Astrocyte of the cerebellum (primary cell): ENCODE measurements at regions of chr14 and their contacts with region 1.

Region 1: DNA sequence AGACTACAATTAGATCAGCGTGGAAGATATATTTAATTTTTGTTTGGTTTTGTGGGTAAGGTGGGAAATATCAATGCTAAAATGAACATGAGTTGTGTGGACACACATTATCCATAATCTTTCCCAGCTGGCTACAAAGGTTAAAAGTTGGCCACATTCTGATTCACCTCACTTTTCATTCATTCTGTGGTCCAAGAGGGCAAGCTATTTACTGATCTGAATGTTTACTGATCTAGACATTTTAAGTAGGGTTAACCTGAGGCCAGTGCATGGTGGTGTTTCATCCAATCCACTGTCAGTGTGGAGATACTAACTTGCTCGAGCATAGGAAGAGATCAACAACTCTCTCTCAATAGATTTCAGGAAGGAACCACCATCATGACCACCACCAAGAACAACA is 71.6 kb downstream of the DCAF5 start:
- DNase-seq: no peak
- H3K4me3 ChIP-seq: no peak overlapping the region
- CTCF ChIP-seq: no peak

Region 2: DNA sequence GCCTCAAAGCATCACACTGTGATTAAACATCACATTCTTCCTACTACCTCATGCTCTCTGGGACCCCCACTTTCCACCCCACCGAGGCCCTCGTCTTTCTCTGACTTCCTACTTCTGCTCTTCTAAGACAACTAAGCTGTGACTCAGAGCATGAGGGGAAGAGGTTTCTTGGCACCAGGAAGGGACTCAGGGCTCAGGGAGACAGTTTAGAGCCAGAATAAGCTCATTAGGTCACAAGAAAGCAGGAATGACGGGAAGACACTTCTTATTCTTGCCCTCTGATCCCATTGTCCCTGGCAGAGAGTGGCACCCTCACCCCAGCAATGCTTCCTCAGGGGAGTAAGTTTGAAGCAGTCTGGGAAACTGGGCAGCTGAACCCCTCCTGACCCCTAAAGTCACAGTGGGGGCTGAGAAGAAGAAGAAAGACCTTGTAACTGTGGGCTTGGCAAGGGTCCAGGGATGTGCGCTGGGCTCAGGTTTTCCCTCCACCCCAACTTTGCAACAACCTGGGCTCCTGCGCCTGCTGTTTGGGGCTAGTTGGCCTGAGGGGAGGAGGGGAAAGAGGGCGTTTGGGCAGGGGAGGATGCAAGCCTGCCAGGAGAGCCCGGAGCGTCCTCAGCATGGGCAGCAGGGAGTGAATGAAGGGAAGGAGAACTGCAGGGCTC is 37.5 kb before region 1 on chr14:
- in situ Hi-C with region 1: loop called (anchors 5 kb)
- DNase-seq: no peak
- H3K4me3 ChIP-seq: no peak overlapping the region
- CTCF ChIP-seq: no peak